GM10248 (cell line): ENCODE measurements at regions of chr11 and their contacts with region 1.

Region 1: DNA sequence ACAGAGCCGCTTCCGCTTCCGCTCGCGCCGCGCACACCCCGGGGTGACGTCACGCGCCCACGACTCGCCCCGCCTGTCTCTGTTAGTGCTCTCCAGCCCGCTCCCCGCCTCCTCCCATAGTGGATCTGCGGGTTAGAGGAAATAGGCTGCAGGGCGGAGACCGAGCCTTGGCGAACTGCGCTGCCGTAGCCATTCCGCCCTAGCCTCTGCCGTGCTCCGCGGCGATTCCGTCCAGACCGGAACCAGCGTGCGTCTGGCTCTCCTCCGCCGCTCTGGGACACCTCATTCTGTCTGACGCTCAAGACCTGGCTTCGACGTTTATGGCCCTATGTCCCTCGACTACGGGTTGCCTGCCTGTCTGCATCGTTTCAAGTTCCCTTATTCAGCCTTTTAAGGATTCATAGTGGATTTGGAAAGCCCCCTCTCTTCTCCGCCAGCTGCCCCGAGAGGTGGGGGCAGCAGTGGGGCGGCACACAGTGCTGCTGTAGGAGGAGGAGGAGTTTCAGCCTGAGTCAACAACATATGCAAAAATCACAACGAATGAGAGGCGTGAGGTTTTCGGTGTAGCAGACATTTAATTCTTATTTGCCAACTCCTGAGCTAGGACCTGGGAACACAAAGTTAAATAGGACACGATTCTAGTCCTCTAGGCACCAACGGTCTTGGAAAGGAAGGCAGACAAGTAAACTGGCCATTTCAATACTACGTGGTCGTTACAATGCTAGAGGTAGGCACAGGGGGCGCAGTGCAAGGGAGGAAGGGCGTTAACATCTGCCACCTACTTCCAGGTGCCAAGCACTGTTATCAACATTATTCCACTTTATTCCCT is at the start of gene TAF10:
- DNase-seq: peak; percentile 90
- CTCF ChIP-seq: peak; percentile 32

Region 2: GRCh38 chr11:6596239-6596877 is 16.1 kb before region 1 on chr11:
- CTCF ChIA-PET with region 1: interaction called, 15 read pairs
- POLR2A ChIA-PET with region 1: no interaction called
- DNase-seq: no peak
- CTCF ChIP-seq: no peak